Activated CD4-positive, alpha-beta T cell treated with anti-CD3 and anti-CD28 coated beads, Interleukin-2, amount 10 ng/mL, durations not matched to agents 7 days and 5 days (primary cell): ENCODE measurements at regions of chr2 and their contacts with region 1.

Region 1: DNA sequence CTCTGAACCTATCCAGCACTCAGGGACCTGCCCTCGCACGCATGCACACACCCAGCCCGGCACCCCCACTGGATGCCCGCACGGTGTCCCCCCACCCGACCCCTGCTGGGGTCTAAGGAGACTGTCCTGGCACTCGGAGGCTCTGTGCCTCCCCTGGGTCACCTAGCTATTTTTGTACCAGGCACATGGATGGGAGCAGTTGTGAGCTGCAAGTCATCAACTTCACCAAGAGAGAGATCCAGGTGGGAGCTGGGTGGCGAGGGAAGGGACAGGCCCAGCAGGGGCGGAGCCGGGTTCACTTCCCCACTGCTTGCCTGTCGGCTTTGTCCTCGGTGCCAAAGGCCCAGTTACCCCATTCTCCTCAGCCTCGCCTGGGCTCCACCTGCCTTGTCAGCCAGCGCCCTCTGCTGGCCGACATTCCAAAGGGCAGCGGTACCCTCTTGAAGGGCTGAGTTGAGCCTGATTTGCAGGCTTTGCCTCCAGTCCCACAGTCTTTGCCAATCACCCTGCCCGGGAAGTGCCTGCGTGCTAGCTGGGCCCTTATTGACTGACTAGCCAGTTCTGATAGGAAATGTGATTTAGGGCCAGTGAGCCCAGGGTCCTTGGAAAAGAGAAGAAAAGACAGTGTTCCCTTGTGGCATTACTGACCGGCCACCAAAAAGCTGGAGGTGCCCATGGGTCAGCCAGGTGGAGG is 5.8 kb downstream of the NT5DC4 start:
- DNase-seq: peak; percentile 91
- H3K4me3 Mint-ChIP-seq: no peak overlapping the region
- H3K27ac Mint-ChIP-seq: peak overlapping the region; percentile 36
- H3K4me1 Mint-ChIP-seq: peaks cover 21% of the 10 kb centered on the region
- H3K27me3 Mint-ChIP-seq: peaks cover 7% of the 10 kb centered on the region

Region 2: GRCh38 chr2:112584134-112584890 is 142.3 kb before region 1 on chr2 and contains the start of gene CHCHD5:
- CTCF ChIA-PET with region 1: interaction called, 10 read pairs
- POLR2A ChIA-PET with region 1: no interaction called
- DNase-seq: peak; percentile 97
- H3K4me3 Mint-ChIP-seq: peak within 1 kb of the TSS; percentile 97
- H3K27ac Mint-ChIP-seq: peak within 1 kb of the TSS; percentile 99
- H3K4me1 Mint-ChIP-seq: peaks cover 38% of the 10 kb centered on the region
- H3K27me3 Mint-ChIP-seq: no peaks in the 10 kb centered on the region
- total RNA-seq, gene CHCHD5: 33.5 to 33.6 TPM

Region 3: DNA sequence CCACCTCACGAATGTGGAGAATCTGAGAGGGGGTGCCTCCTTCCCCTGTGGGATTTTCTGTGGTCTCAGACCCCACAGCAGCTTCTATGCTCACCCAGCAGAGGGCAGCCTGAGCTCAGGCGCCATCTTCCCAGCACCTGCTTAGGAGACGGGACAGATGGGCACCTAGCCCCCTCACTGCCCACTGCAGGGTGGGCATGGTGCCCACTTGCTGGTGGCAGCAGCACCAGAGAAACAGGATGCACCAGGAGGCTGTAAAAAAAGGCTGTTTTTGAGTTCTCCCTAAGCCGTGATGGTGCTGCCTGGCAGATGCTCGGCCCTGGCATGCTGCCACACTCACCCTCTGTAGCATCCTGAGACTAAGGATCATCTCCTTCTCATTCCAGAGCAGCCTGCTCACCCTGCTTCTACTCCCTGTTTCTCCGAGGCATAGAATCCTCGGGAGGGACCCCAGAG is 100.0 kb before region 1 on chr2:
- CTCF ChIA-PET with region 1: interaction called, 97 read pairs
- POLR2A ChIA-PET with region 1: no interaction called
- DNase-seq: peak; percentile 70
- H3K4me3 Mint-ChIP-seq: peak overlapping the region; percentile 51
- H3K27ac Mint-ChIP-seq: peak overlapping the region; percentile 98
- H3K4me1 Mint-ChIP-seq: peaks cover 88% of the 10 kb centered on the region
- H3K27me3 Mint-ChIP-seq: no peaks in the 10 kb centered on the region

Region 4: DNA sequence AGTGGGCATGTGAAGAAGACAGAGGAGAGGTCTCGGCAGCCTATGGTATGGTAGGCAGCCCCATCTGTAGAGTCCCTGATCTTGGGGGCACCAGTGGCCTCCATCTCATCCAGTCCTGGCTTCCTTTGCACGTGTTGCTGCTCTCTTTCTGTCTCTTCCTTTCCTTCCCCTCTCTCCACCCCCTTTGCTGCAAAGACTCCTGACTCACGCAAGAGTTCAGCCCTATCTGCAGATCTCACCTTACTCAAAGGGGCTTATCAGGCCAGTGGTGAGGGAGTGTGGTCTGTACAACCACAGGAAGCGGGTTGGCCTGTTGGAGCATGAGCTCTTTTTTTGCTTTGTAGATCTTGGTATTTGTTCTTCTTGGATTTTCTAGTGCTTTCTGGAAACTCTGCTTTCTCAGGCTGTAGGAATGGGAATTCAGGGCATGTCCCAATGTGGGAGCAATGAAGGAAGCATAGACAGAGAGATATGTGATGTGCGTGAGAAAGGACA is 20.4 kb before region 1 on chr2:
- CTCF ChIA-PET with region 1: interaction called, 29 read pairs
- POLR2A ChIA-PET with region 1: no interaction called
- DNase-seq: peak; percentile 88
- H3K4me3 Mint-ChIP-seq: peak overlapping the region; percentile 17
- H3K27ac Mint-ChIP-seq: peak overlapping the region; percentile 38
- H3K4me1 Mint-ChIP-seq: peaks cover 52% of the 10 kb centered on the region
- H3K27me3 Mint-ChIP-seq: peaks cover 11% of the 10 kb centered on the region

Region 5: GRCh38 chr2:112737542-112738232 is 11.0 kb after region 1 on chr2:
- CTCF ChIA-PET with region 1: interaction called, 11 read pairs
- POLR2A ChIA-PET with region 1: no interaction called
- DNase-seq: no peak
- H3K4me3 Mint-ChIP-seq: no peak overlapping the region
- H3K27ac Mint-ChIP-seq: no peak overlapping the region
- H3K4me1 Mint-ChIP-seq: no peaks in the 10 kb centered on the region
- H3K27me3 Mint-ChIP-seq: no peaks in the 10 kb centered on the region

Region 6: DNA sequence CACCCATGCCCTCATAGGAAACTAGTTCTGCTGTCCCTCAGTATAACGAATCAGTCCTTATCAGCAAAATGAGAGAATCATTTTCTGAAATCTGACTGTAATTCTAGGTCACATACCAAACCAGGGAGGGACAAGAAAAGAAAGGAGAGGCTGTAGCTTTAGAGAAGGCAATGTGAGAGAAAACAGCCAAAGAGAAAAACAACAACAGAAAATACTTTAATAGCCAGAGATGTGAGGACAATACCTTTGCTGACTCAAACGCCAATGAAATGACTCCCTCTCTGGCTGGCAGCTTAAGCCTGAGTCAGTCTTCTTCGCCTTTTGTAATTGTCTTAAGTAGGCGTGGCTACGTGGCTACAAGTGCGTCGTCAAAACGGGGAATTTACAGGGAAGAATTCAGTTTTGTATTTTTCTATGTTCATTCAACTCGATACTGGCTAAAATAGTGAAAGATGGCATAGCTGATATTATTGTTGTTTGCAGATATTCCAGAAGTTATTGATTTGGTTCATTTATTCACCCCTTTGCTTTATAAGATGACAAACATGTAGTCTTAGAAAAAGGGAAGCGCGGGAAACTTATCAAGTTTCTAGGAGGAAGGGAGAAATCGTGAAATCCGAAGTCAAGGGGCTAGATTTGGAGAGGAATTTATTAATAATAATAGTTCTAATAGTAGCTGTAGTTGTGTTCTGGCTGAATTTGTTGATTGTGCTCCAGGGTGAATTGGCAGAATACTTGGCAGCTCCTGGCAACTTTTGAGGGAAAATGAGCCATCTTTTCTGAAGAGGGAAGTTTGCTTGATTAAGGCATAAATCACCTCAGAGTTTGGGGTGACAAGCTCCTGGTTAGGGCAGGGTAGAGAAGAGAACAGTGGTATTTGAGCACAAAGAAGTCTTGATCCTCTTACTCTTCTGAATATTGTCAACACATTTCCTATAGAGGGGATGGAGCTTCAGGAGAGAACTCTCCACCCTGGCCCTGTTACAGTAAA is 57.9 kb after region 1 on chr2 and contains the start of gene IL1A:
- CTCF ChIA-PET with region 1: no interaction called
- POLR2A ChIA-PET with region 1: no interaction called
- DNase-seq: no peak
- H3K4me3 Mint-ChIP-seq: peak within 1 kb of the TSS; percentile 2
- H3K27ac Mint-ChIP-seq: no peak within 1 kb of the TSS
- H3K4me1 Mint-ChIP-seq: peaks cover 3% of the 10 kb centered on the region
- H3K27me3 Mint-ChIP-seq: peaks cover 10% of the 10 kb centered on the region
- total RNA-seq, gene IL1A: 0.17 to 0.21 TPM

Region 7: GRCh38 chr2:112972423-112973086 is 245.9 kb after region 1 on chr2:
- CTCF ChIA-PET with region 1: no interaction called
- POLR2A ChIA-PET with region 1: no interaction called
- DNase-seq: no peak
- H3K4me3 Mint-ChIP-seq: no peak overlapping the region
- H3K27ac Mint-ChIP-seq: no peak overlapping the region
- H3K4me1 Mint-ChIP-seq: peaks cover 4% of the 10 kb centered on the region
- H3K27me3 Mint-ChIP-seq: peaks cover 5% of the 10 kb centered on the region